ENCODE measurements at regions of chr1 and their contacts with region 1.

Region 1: GRCh38 chr1:247373721-247374141 is 42.1 kb upstream of the ZNF496 start:
- DNase-seq: peak; percentile 70
- H3K4me3 ChIP-seq: peak overlapping the region; percentile 28
- H3K27ac ChIP-seq: no peak overlapping the region
- H3K4me1 ChIP-seq: peaks cover 7% of the 10 kb centered on the region
- H3K27me3 ChIP-seq: no peaks in the 10 kb centered on the region
- CTCF ChIP-seq: peak; percentile 59

Region 2: DNA sequence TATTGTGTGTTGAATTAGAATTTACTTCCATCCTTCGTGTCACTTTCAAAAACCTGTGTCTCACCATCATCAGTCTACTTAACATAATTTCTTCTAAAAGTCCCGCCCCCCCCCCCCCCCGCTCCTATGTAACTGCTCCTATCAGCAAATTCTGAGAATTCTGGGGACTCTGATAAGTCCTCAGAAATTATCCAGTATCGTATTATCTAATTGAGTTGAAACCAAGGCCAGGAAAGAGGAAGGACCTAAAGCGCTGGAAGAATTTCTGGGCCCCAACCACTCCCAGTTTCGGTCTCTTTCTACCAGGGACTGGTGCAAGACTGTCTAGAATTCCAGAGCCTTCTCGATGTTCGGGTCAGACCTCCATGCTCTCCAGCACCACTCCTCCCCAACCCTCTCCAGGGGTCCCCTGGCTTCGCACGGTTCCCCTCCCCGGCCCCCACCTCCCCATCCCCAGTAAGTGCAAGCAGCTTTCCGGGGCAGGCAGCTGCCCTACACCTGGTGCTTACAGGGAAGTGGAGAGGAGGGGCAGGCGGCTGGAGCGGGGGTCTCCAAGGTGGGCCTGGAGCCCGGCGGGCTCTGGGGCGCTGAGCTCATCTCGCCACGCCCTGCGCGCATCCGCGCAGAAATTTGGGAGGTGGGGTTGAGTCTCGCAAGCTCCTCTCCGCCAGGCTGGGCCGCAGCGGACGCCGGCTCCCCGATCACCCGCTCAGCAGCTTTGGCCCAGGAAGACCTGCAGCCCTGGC is 26.1 kb before region 1 on chr1:
- CTCF ChIA-PET with region 1: interaction called, 11 read pairs
- POLR2A ChIA-PET with region 1: no interaction called
- intact Hi-C with region 1: no loop called
- DNase-seq: no peak
- H3K4me3 ChIP-seq: no peak overlapping the region
- H3K27ac ChIP-seq: no peak overlapping the region
- H3K4me1 ChIP-seq: peaks cover 8% of the 10 kb centered on the region
- H3K27me3 ChIP-seq: no peaks in the 10 kb centered on the region
- CTCF ChIP-seq: no peak

Region 3: GRCh38 chr1:247487057-247487456 is 113.3 kb after region 1 on chr1:
- CTCF ChIA-PET with region 1: interaction called, 3 read pairs
- POLR2A ChIA-PET with region 1: no interaction called
- intact Hi-C with region 1: loop called (anchors 2 kb)
- DNase-seq: peak; percentile 45
- H3K4me3 ChIP-seq: no peak overlapping the region
- H3K27ac ChIP-seq: no peak overlapping the region
- H3K4me1 ChIP-seq: no peaks in the 10 kb centered on the region
- H3K27me3 ChIP-seq: peaks cover 38% of the 10 kb centered on the region
- CTCF ChIP-seq: peak; percentile 57

Measured in A673 (cell line).